Activated B cell treated with CpG ODN at 0.5 μM for 24 hours (primary cell): ENCODE measurements at regions of chr6 and their contacts with region 1.

Region 1: DNA sequence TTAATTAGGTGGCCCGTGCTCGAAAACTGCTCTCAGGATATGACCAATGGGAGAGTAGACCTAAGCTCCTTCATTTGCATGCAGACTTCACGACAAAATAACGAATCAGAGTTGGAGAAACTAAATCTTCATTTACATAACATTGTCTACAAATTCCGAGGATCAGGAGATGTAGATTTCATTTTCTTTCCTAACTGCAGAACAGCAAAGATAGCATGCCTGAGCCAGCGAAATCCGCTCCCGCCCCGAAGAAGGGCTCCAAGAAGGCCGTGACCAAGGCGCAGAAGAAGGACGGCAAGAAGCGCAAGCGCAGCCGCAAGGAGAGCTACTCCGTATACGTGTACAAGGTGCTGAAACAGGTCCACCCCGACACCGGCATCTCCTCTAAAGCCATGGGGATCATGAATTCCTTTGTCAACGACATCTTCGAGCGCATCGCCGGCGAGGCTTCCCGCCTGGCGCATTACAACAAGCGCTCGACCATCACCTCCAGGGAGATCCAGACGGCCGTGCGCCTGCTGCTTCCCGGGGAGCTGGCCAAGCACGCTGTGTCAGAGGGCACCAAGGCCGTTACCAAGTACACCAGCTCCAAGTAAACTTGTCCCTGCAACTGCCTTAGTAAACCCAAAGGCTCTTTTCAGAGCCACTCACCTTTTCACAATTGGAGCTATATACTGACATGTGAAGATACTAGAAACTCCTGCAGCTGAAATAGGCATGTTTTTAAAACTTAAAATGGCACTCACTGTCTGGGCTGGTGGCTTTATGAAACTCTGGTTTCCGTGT is 96.5 kb downstream of the HFE start:
- DNase-seq: peak; percentile 60
- ATAC-seq: peak; percentile 86
- H3K4me3 Mint-ChIP-seq: peak overlapping the region; percentile 98
- H3K27ac Mint-ChIP-seq: peak overlapping the region; percentile 91
- H3K4me1 Mint-ChIP-seq: peaks cover 30% of the 10 kb centered on the region
- H3K27me3 Mint-ChIP-seq: no peaks in the 10 kb centered on the region
- CTCF ChIP-seq: no peak

Region 2: GRCh38 chr6:26045065-26045927 is 138.5 kb before region 1 on chr6:
- CTCF ChIA-PET with region 1: no interaction called
- POLR2A ChIA-PET with region 1: interaction called, 22 read pairs
- intact Hi-C with region 1: no loop called
- DNase-seq: peak; percentile 51
- ATAC-seq: peak; percentile 58
- H3K4me3 Mint-ChIP-seq: peak overlapping the region; percentile 91
- H3K27ac Mint-ChIP-seq: peak overlapping the region; percentile 99
- H3K4me1 Mint-ChIP-seq: peaks cover 24% of the 10 kb centered on the region
- H3K27me3 Mint-ChIP-seq: no peaks in the 10 kb centered on the region
- CTCF ChIP-seq: no peak

Region 3: GRCh38 chr6:26204332-26205165 is 20.8 kb after region 1 on chr6:
- CTCF ChIA-PET with region 1: interaction called, 9 read pairs
- POLR2A ChIA-PET with region 1: interaction called, 587 read pairs
- intact Hi-C with region 1: loop called (anchors 1 kb)
- DNase-seq: peak; percentile 70
- ATAC-seq: peak; percentile 59
- H3K4me3 Mint-ChIP-seq: no peak overlapping the region
- H3K27ac Mint-ChIP-seq: no peak overlapping the region
- H3K4me1 Mint-ChIP-seq: peaks cover 30% of the 10 kb centered on the region
- H3K27me3 Mint-ChIP-seq: peaks cover 2% of the 10 kb centered on the region
- CTCF ChIP-seq: no peak

Region 4: GRCh38 chr6:26240154-26241032 is 56.6 kb after region 1 on chr6:
- CTCF ChIA-PET with region 1: no interaction called
- POLR2A ChIA-PET with region 1: interaction called, 55 read pairs
- intact Hi-C with region 1: loop called (anchors 2 kb)
- DNase-seq: peak; percentile 61
- ATAC-seq: peak; percentile 79
- H3K4me3 Mint-ChIP-seq: peak overlapping the region; percentile 82
- H3K27ac Mint-ChIP-seq: peak overlapping the region; percentile 92
- H3K4me1 Mint-ChIP-seq: peaks cover 26% of the 10 kb centered on the region
- H3K27me3 Mint-ChIP-seq: no peaks in the 10 kb centered on the region
- CTCF ChIP-seq: no peak

Region 5: GRCh38 chr6:27809939-27810767 is 1626.4 kb after region 1 on chr6:
- CTCF ChIA-PET with region 1: no interaction called
- POLR2A ChIA-PET with region 1: interaction called, 9 read pairs
- intact Hi-C with region 1: loop called (anchors 2 kb)
- DNase-seq: peak; percentile 68
- ATAC-seq: peak; percentile 59
- H3K4me3 Mint-ChIP-seq: peak overlapping the region; percentile 93
- H3K27ac Mint-ChIP-seq: peak overlapping the region; percentile 97
- H3K4me1 Mint-ChIP-seq: peaks cover 59% of the 10 kb centered on the region
- H3K27me3 Mint-ChIP-seq: no peaks in the 10 kb centered on the region
- CTCF ChIP-seq: no peak